ENCODE measurements at regions of chr20 and their contacts with region 1.

Region 1: GRCh38 chr20:17579369-17580039 is 9.6 kb downstream of the DSTN start:
- DNase-seq: no peak
- H3K4me3 ChIP-seq: peak overlapping the region; percentile 10 to 85
- H3K27ac ChIP-seq: peak overlapping the region; percentile 50 to 99
- H3K4me1 ChIP-seq: peaks cover 0 to 98% (median 56%) of the 10 kb centered on the region in 4 donors
- H3K27me3 ChIP-seq: no peaks in the 10 kb centered on the region
- CTCF ChIP-seq: no peak

Region 2: DNA sequence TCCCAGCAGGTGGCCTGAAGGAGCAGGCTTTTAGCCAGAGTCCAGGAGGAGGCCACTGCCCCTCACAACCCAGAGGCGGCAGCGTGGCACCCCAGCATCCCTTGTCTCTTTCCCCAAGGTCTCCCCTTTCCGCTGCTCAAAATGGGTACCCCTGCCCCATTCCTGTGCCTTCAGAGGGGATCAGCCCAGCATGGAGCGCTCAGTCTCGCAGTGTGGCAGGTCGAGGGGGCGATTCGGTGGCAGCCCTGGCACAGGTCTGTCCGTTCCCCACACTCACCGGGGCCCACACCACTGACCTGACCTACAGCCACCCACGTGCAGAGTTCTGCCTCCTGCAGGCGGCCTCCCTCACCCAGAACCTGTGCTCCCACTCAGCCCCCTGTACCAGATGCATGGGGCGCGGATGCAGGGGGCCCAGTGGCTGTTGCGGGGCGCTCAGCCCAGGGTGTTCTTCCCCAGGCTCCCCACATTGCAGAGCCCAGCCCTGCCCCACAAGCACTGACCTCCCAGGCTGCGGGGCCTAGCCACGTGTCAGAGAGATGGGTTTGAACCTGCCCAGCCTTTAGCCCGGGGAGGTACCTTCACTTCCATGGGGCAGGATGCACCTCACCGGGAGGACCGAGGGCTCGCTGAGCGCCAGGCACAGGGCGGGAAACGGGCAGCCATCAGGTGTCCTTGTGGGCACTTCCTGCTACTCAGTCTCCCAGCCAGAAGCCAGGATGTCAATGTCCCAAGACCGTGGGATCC is 32.2 kb after region 1 on chr20:
- intact Hi-C with region 1: loop called (anchors 5 kb)
- DNase-seq: peak in 1 of 2 donors; percentile 35
- H3K4me3 ChIP-seq: peak overlapping the region in 1 of 2 donors; percentile 3
- H3K27ac ChIP-seq: peak overlapping the region; percentile 80 to 95
- H3K4me1 ChIP-seq: peaks cover 13 to 100% (median 87%) of the 10 kb centered on the region in 4 donors
- H3K27me3 ChIP-seq: no peaks in the 10 kb centered on the region
- CTCF ChIP-seq: peak; percentile 28 to 41

Region 3: DNA sequence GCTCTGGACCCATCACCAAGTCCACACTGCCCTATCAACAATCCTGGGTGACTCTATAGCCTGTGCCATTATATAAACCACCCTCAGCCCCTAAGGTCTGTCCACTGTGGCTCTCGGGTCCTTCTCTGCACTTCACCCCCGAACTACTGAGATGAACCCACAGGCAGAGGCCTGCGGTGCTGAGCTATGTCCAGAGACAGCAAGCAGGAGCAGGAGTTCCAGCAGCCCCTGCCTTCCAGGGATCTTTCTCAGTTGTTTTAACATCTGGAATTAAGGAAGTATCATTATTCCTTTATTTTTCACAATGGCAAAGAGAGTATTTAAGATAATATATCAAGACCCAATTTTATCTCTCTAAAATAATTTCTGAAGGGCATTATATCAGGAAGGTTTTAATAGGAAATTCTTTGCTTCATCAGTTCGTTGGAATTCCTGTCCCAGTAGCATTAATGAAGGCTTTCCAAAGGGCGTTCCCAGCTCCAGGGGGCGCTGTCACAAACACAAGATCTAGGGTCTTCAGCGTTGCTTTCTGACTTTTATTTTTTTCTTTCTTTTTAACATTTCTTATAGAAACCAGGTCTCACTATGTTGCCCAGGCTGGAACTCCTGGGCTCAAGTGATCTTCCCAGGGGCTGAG is 75.3 kb after region 1 on chr20:
- intact Hi-C with region 1: no loop called
- DNase-seq: peak; percentile 71 to 73
- H3K4me3 ChIP-seq: no peak overlapping the region
- H3K27ac ChIP-seq: no peak overlapping the region
- H3K4me1 ChIP-seq: peaks cover 0 to 44% (median 25%) of the 10 kb centered on the region in 4 donors
- H3K27me3 ChIP-seq: no peaks in the 10 kb centered on the region
- CTCF ChIP-seq: peak; percentile 43 to 65